Activated CD4-positive, alpha-beta memory T cell treated with anti-CD3 and anti-CD28 coated beads, Interleukin-2, amount 10 ng/mL, durations not matched to agents 7 days and 5 days (primary cell): ENCODE measurements at regions of chr22 and their contacts with region 1.

Region 1: GRCh38 chr22:29837780-29838598 is at the start of gene ASCC2:
- DNase-seq: peak; percentile 100
- H3K4me3 Mint-ChIP-seq: peak within 1 kb of the TSS; percentile 80
- H3K27ac Mint-ChIP-seq: peak within 1 kb of the TSS; percentile 86
- H3K4me1 Mint-ChIP-seq: peaks cover 32% of the 10 kb centered on the region
- H3K27me3 Mint-ChIP-seq: no peaks in the 10 kb centered on the region
- total RNA-seq, gene ASCC2: 76.5 to 81.0 TPM

Region 2: GRCh38 chr22:29755889-29756288 is 82.1 kb before region 1 on chr22:
- CTCF ChIA-PET with region 1: no interaction called
- POLR2A ChIA-PET with region 1: no interaction called
- DNase-seq: no peak
- H3K4me3 Mint-ChIP-seq: no peak overlapping the region
- H3K27ac Mint-ChIP-seq: no peak overlapping the region
- H3K4me1 Mint-ChIP-seq: peaks cover 13% of the 10 kb centered on the region
- H3K27me3 Mint-ChIP-seq: no peaks in the 10 kb centered on the region

Region 3: DNA sequence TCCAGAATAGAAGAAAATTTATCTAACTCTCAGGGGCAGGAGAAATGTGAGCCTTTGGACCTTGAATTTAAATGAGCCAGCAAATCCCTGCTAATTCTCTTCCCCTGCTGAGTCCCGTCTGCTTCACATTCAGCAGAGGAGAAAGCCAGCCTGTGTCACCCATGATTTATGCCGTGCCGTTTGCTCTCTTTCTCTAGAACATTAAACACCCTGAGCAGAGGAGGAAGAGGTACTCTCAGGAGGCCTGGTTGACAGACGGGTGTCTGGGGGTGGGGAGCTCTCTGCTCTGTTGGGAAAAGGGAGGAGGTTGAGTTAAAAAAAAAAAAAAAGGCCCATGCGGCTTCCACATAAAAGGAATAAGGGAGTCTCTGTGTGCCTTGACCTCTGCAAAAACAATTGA is 33.7 kb after region 1 on chr22:
- CTCF ChIA-PET with region 1: no interaction called
- POLR2A ChIA-PET with region 1: no interaction called
- DNase-seq: no peak
- H3K4me3 Mint-ChIP-seq: no peak overlapping the region
- H3K27ac Mint-ChIP-seq: no peak overlapping the region
- H3K4me1 Mint-ChIP-seq: peaks cover 3% of the 10 kb centered on the region
- H3K27me3 Mint-ChIP-seq: peaks cover 17% of the 10 kb centered on the region

Region 4: GRCh38 chr22:29883045-29883774 is 45.2 kb after region 1 on chr22 and contains the start of gene MTMR3:
- CTCF ChIA-PET with region 1: no interaction called
- POLR2A ChIA-PET with region 1: interaction called, 13 read pairs
- DNase-seq: peak; percentile 95
- H3K4me3 Mint-ChIP-seq: peak within 1 kb of the TSS; percentile 86
- H3K27ac Mint-ChIP-seq: peak within 1 kb of the TSS; percentile 67
- H3K4me1 Mint-ChIP-seq: peaks cover 12% of the 10 kb centered on the region
- H3K27me3 Mint-ChIP-seq: peaks cover 2% of the 10 kb centered on the region
- total RNA-seq, gene MTMR3: 33.1 to 35.3 TPM